A549 (cell line): ENCODE measurements at regions of chr10 and their contacts with region 1.

Region 1: DNA sequence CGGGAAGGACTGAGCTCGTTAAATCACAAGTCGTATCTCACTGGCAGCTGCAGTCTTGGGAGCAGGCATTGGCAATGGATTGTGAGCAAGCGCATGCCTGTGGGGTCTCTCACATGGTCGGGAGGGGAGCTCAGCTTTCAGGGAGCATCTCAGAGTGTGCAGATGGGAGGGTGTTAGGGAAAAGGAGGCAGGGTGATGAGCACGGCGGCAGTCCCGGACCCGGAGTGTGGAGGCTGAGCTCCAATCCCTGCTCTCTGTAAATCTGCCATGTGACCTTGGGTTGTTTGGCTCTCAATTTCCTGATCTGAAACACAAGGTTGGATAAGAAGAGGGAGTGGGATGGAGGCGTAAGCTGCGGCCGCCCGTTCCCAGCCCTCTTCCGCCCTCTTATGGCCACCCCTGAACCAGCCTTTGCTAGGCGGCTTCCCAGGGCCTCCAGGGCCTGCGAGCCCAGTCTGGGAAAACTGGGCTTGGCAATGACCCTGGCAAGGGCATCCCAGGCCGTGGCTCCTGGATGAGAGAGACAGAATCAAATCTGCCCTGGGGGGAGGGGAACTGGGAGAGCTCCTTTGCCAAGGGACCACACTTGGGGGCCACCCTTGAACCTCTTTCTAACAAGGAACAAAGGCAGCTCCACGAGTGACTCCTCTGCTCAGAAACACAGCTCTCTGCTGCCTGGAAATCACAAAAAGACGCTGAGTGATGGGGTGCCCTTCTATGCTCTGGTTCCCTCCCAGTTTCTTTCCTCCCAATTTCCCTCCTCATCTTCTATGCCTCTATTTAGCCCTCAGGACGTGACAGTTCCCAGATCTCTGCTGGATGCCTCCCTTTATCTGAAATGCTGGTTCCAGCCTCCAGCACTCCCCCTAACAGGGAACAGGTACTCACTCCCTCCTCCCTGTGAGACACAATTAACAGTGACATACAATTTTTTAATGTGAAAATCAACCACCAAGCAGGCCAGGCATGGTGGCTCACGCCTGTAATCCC is 41.7 kb upstream of the LOXL4 start:
- DNase-seq: peak; percentile 68 to 89
- ATAC-seq: peak; percentile 95 to 99
- H3K4me3 ChIP-seq: no peak overlapping the region
- H3K27ac ChIP-seq: peak overlapping the region in 1 of 2 experiments; percentile 35; a peak in 1 of 6 replicates
- H3K4me1 ChIP-seq: no peaks in the 10 kb centered on the region
- CTCF ChIP-seq: peak; percentile 74
- EP300 ChIP-seq: no peak
- POLR2A ChIP-seq: no peak
- RAD21 ChIP-seq: peak; percentile 90 to 93

Region 2: DNA sequence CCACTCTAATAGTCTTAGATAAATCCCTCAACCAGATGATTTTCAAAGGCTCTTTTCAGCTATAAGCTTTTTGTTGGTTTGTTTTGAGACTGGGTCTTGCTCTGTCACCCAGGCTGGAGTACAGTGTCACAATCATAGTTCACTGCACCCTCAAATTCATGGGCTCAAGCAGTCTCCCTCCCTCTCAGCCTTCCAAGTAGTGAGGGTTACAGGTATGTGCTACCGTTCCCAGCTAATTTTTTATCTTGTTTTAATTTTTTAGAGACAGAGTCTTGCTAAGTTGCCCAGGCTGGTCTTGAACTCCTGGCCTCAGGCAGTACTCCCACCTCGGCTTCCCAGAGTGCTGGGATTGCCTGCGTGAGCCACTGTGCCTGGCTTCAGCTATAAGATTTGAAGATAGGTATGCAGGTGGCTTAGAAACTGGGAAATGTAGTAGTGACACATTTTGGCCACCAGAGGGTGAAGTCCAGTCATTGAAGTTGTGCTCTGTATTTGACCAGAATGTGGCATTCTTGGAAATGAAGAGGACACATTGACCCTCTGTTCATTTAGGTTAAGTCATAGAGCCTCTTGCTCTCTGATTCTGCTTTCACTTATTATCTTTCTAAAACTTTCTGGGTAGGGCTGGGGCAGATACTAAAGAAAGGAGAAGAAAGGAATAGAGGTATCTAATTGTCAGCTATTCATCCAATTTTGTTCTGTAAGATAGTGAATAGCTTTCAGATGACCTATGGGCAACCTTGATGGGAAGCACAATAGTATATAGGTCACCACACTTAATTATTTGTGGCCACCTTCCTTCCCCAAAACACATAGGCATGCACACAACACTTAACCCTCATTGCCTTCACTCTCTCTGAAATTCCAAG is 139.2 kb before region 1 on chr10:
- CTCF ChIA-PET with region 1: interaction called, 45 read pairs
- POLR2A ChIA-PET with region 1: no interaction called
- DNase-seq: peak; percentile 44 to 61
- ATAC-seq: peak; percentile 95 to 97
- H3K4me3 ChIP-seq: no peak overlapping the region
- H3K27ac ChIP-seq: no peak overlapping the region
- H3K4me1 ChIP-seq: no peaks in the 10 kb centered on the region
- CTCF ChIP-seq: peak; percentile 66
- EP300 ChIP-seq: no peak
- POLR2A ChIP-seq: no peak
- RAD21 ChIP-seq: peak; percentile 56 to 58

Region 3: GRCh38 chr10:98253499-98253898 is 56.2 kb before region 1 on chr10:
- CTCF ChIA-PET with region 1: interaction called, 16 read pairs
- POLR2A ChIA-PET with region 1: no interaction called
- DNase-seq: no peak
- ATAC-seq: no peak
- H3K4me3 ChIP-seq: no peak overlapping the region
- H3K27ac ChIP-seq: no peak overlapping the region
- H3K4me1 ChIP-seq: no peaks in the 10 kb centered on the region
- CTCF ChIP-seq: no peak
- EP300 ChIP-seq: no peak
- POLR2A ChIP-seq: no peak
- RAD21 ChIP-seq: no peak

Region 4: GRCh38 chr10:98269072-98269912 is 40.4 kb before region 1 on chr10:
- CTCF ChIA-PET with region 1: interaction called, 12 read pairs
- POLR2A ChIA-PET with region 1: no interaction called
- DNase-seq: peak; percentile 68 to 70
- ATAC-seq: peak; percentile 27 to 64; a peak in 5 of 6 replicates
- H3K4me3 ChIP-seq: peak overlapping the region; percentile 48; the same call in 1 of the 3 replicates
- H3K27ac ChIP-seq: peak overlapping the region; percentile 72 to 88
- H3K4me1 ChIP-seq: peaks cover 29% of the 10 kb centered on the region
- CTCF ChIP-seq: no peak
- EP300 ChIP-seq: no peak
- POLR2A ChIP-seq: no peak
- RAD21 ChIP-seq: no peak

Region 5: GRCh38 chr10:98295907-98296306 is 13.8 kb before region 1 on chr10:
- CTCF ChIA-PET with region 1: interaction called, 27 read pairs
- POLR2A ChIA-PET with region 1: no interaction called
- DNase-seq: no peak
- ATAC-seq: no peak
- H3K4me3 ChIP-seq: no peak overlapping the region
- H3K27ac ChIP-seq: no peak overlapping the region
- H3K4me1 ChIP-seq: no peaks in the 10 kb centered on the region
- CTCF ChIP-seq: no peak
- EP300 ChIP-seq: no peak
- POLR2A ChIP-seq: no peak
- RAD21 ChIP-seq: no peak

Region 6: DNA sequence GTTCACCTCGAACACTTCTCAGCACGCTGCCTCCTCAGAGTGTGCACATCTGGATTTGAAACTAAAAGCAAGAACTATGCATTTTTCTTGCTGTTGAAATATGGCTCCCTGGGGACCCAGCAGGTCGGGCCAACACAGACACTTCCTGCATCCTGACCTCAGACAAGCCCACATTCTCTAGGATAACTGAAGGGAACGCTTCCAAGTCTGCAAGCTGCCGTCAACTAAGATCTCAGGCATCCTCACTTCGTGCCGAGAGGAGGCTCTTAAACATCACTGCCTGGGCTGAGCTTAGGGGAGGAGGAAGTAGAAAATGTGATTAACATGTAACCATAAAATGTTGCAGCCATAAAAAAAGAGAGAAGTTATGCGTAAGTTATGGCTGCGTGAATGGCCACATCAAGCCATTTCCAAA is 39.9 kb after region 1 on chr10:
- CTCF ChIA-PET with region 1: interaction called, 10 read pairs
- POLR2A ChIA-PET with region 1: no interaction called
- DNase-seq: no peak
- ATAC-seq: no peak
- H3K4me3 ChIP-seq: no peak overlapping the region
- H3K27ac ChIP-seq: no peak overlapping the region
- H3K4me1 ChIP-seq: no peaks in the 10 kb centered on the region
- CTCF ChIP-seq: no peak
- EP300 ChIP-seq: no peak
- POLR2A ChIP-seq: no peak
- RAD21 ChIP-seq: no peak